Caco-2 (cell line): ENCODE measurements at regions of chr2 and their contacts with region 1.

Region 1: GRCh38 chr2:65453916-65454315 is 21.5 kb upstream of the SPRED2 start:
- DNase-seq: peak; percentile 57 to 62
- H3K4me3 ChIP-seq: no peak overlapping the region
- H3K4me3 Mint-ChIP-seq: no peak overlapping the region
- H3K27ac Mint-ChIP-seq: no peak overlapping the region
- H3K4me1 ChIP-seq: peaks cover 42% of the 10 kb centered on the region
- H3K4me1 Mint-ChIP-seq: peaks cover 21% of the 10 kb centered on the region
- H3K27me3 ChIP-seq: no peaks in the 10 kb centered on the region
- H3K27me3 Mint-ChIP-seq: no peaks in the 10 kb centered on the region
- CTCF ChIP-seq: no peak

Region 2: DNA sequence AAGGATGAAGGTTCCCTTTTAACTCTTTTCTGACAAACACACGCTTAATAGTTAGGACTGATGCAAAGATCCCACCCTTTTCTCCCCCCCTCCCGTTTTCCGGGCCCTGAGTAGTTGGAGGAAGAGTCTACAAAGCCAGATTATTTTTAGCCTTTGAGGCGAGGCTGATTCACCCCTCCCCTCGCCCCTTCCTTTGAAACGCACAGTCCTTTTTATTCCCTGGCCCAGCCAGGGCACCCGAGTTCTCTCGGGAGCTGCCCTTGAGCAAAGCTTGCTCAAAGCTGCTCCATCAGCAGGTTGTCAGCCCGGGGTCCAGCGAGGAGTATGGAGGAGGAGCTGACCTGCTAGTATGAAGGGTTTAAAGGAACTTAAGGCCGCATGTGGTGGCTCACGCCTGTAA is 25.6 kb after region 1 on chr2:
- CTCF ChIA-PET with region 1: no interaction called
- POLR2A ChIA-PET with region 1: no interaction called
- intact Hi-C with region 1: no loop called
- DNase-seq: no peak
- H3K4me3 ChIP-seq: no peak overlapping the region
- H3K4me3 Mint-ChIP-seq: no peak overlapping the region
- H3K27ac Mint-ChIP-seq: no peak overlapping the region
- H3K4me1 ChIP-seq: no peaks in the 10 kb centered on the region
- H3K4me1 Mint-ChIP-seq: no peaks in the 10 kb centered on the region
- H3K27me3 ChIP-seq: no peaks in the 10 kb centered on the region
- H3K27me3 Mint-ChIP-seq: no peaks in the 10 kb centered on the region
- CTCF ChIP-seq: no peak

Region 3: DNA sequence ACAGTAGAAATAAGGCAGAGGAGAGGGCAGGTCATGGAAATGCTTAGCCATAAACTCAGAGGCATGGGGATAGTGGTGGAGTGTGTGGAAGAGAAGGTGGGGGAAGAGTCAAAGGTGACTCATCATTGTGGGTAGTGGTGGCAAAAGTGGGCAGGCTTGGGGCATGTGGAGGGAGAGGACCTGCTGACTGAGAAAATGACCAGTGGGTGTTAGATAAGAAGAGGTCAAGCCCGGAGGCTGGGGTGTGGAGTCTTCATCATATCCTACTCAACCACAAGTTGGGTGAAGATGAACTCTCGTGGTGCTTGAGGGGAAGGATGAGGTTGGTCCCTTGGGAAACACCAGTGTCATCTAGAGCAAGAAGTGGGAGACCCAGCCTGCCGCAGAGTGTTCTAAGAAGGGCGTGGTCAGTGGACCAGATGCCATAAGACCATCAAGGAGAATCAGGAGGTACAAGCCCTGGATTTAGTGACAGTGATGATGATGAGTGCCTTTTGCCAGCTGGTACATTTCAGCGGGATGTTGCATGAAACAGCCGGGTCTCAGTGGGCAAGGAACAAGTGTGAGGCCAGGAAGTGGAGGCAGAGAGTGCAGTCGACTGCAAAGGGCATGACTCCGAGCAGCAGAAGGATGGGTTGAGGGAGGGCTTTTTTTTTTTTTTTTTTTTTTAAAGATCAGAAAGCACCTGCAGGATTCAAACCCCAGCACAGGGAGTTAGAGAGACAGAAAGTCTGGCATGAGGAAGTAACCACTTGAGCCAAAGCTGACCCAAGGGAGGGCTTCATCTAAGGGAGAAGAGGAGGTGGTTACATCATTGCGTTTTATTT is 101.1 kb after region 1 on chr2:
- CTCF ChIA-PET with region 1: no interaction called
- POLR2A ChIA-PET with region 1: no interaction called
- intact Hi-C with region 1: loop called (anchors 5 kb)
- DNase-seq: no peak
- H3K4me3 ChIP-seq: no peak overlapping the region
- H3K4me3 Mint-ChIP-seq: no peak overlapping the region
- H3K27ac Mint-ChIP-seq: no peak overlapping the region
- H3K4me1 ChIP-seq: peaks cover 5% of the 10 kb centered on the region; the same call in 1 of the 2 replicates
- H3K4me1 Mint-ChIP-seq: no peaks in the 10 kb centered on the region
- H3K27me3 ChIP-seq: no peaks in the 10 kb centered on the region
- H3K27me3 Mint-ChIP-seq: peaks cover 8% of the 10 kb centered on the region
- CTCF ChIP-seq: no peak